ENCODE measurements at regions of chr5 and their contacts with region 1.

Region 1: GRCh38 chr5:92552206-92553160 is 1028.5 kb downstream of the NR2F1-AS1 start:
- DNase-seq: peak; percentile 93
- H3K4me3 Mint-ChIP-seq: peak overlapping the region; percentile 61
- H3K27ac Mint-ChIP-seq: peak overlapping the region; percentile 98
- H3K4me1 Mint-ChIP-seq: peaks cover 13% of the 10 kb centered on the region
- H3K27me3 Mint-ChIP-seq: no peaks in the 10 kb centered on the region
- CTCF ChIP-seq: no peak

Region 2: DNA sequence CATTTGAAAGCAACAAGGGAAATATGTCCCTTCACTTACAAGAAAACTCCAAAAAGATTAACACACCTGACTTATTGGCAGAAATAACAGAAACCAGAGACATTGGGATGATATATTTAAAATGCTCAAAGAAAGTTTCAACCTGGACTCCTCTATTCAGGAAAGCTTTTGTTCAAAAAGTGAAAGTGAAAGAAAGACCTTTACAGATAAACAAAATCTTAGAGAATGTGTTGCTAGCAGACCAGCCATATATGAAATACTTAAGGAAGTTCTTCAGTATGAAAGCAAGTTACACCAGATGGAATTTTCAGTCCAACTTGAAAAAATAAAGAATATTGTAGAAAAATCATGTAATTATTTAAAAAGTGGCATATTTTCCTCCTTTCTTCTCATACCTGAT is 46.6 kb before region 1 on chr5:
- CTCF ChIA-PET with region 1: no interaction called
- POLR2A ChIA-PET with region 1: no interaction called
- intact Hi-C with region 1: loop called (anchors 5 kb)
- DNase-seq: peak; percentile 30
- H3K4me3 Mint-ChIP-seq: peak overlapping the region; percentile 51
- H3K27ac Mint-ChIP-seq: peak overlapping the region; percentile 92
- H3K4me1 Mint-ChIP-seq: peaks cover 12% of the 10 kb centered on the region
- H3K27me3 Mint-ChIP-seq: no peaks in the 10 kb centered on the region
- CTCF ChIP-seq: no peak

Region 3: GRCh38 chr5:92588876-92589275 is 36.4 kb after region 1 on chr5:
- CTCF ChIA-PET with region 1: no interaction called
- POLR2A ChIA-PET with region 1: no interaction called
- intact Hi-C with region 1: no loop called
- DNase-seq: no peak
- H3K4me3 Mint-ChIP-seq: no peak overlapping the region
- H3K27ac Mint-ChIP-seq: no peak overlapping the region
- H3K4me1 Mint-ChIP-seq: no peaks in the 10 kb centered on the region
- H3K27me3 Mint-ChIP-seq: no peaks in the 10 kb centered on the region
- CTCF ChIP-seq: no peak

Region 4: DNA sequence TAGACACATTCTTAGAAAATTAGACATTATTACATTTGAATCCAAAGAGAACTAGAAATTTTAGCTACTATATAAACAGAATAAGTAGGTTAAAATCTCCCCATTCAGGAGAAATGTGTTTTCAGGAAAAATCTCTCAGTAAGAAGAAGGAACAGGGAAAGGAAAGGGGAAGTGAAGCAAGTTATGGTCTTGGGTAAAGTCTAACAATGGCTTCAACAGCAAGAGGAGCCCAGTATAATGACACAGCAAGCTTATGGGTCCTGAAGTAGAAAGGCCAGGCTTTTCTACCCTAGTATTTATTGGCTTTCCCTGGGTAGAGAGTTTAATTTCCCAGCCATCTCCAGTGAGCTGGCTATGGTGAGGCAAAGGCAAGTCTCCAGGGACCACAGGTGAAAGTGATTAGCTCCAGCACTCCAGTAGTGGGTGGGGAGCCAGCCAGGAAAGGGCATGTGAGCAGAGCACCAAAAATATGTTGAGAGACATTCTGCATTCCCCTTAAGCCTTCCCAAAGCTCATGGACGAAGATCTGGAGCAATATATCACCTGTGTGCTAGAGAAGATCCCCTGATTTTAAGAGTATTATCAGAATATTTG is 46.8 kb after region 1 on chr5:
- CTCF ChIA-PET with region 1: no interaction called
- POLR2A ChIA-PET with region 1: no interaction called
- intact Hi-C with region 1: no loop called
- DNase-seq: no peak
- H3K4me3 Mint-ChIP-seq: no peak overlapping the region
- H3K27ac Mint-ChIP-seq: no peak overlapping the region
- H3K4me1 Mint-ChIP-seq: no peaks in the 10 kb centered on the region
- H3K27me3 Mint-ChIP-seq: no peaks in the 10 kb centered on the region
- CTCF ChIP-seq: no peak

Region 5: GRCh38 chr5:92641031-92641962 is 88.8 kb after region 1 on chr5:
- CTCF ChIA-PET with region 1: no interaction called
- POLR2A ChIA-PET with region 1: no interaction called
- intact Hi-C with region 1: no loop called
- DNase-seq: peak; percentile 81
- H3K4me3 Mint-ChIP-seq: peak overlapping the region; percentile 68
- H3K27ac Mint-ChIP-seq: peak overlapping the region; percentile 90
- H3K4me1 Mint-ChIP-seq: peaks cover 22% of the 10 kb centered on the region
- H3K27me3 Mint-ChIP-seq: no peaks in the 10 kb centered on the region
- CTCF ChIP-seq: no peak

Region 6: DNA sequence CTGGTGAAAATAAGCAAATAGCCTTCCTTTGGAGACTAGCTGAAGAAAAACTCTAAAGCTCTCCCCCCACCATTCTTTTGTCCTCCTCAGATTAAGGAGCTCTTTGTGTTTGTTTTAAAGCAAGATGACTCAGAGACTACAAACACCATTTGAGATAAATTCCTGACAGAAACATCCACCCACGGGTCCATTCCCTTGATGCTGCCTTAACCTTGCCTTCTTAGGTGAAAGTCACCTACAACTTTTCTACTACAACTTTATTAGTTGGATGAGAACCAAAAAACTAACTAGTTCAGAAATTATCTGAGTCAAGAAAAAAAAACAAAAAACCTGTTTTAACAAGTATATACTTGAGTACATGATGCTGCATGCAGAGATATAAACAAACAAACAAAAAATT is 197.5 kb after region 1 on chr5:
- CTCF ChIA-PET with region 1: no interaction called
- POLR2A ChIA-PET with region 1: no interaction called
- intact Hi-C with region 1: loop called (anchors 10 kb)
- DNase-seq: peak; percentile 47
- H3K4me3 Mint-ChIP-seq: no peak overlapping the region
- H3K27ac Mint-ChIP-seq: peak overlapping the region; percentile 37
- H3K4me1 Mint-ChIP-seq: peaks cover 12% of the 10 kb centered on the region
- H3K27me3 Mint-ChIP-seq: no peaks in the 10 kb centered on the region
- CTCF ChIP-seq: no peak

Region 7: DNA sequence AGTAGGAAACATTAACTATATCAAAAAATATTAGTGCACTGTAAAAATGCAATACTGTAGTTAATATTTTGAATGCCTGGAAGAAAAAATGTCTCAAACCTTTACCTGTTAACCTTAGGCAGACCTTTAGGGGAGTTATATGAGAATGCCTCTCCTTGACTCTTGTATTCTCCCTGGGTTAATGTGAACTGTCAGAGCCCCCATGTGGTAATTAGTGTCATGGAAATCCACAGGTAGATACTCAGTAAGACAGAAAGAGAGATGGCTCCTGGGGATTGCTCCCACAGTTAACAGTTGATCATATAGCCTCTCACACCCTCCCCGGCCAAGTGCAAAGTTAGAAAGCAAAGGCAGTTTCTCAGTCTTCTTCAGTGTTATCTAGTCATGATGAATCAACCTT is 285.8 kb after region 1 on chr5:
- CTCF ChIA-PET with region 1: no interaction called
- POLR2A ChIA-PET with region 1: no interaction called
- intact Hi-C with region 1: loop called (anchors 2 kb)
- DNase-seq: peak; percentile 62
- H3K4me3 Mint-ChIP-seq: no peak overlapping the region
- H3K27ac Mint-ChIP-seq: no peak overlapping the region
- H3K4me1 Mint-ChIP-seq: peaks cover 15% of the 10 kb centered on the region
- H3K27me3 Mint-ChIP-seq: no peaks in the 10 kb centered on the region
- CTCF ChIP-seq: peak; percentile 8